SK-N-SH (cell line): ENCODE measurements at regions of chr10 and their contacts with region 1.

Region 1: GRCh38 chr10:100827819-100828737 is 82.7 kb downstream of the PAX2 start:
- DNase-seq: peak; percentile 91
- H3K4me3 ChIP-seq: peak overlapping the region; percentile 38 to 39
- H3K27ac ChIP-seq: no peak overlapping the region
- H3K4me1 ChIP-seq: peaks cover 0 to 17% of the 10 kb centered on the region in 2 experiments; a peak in 1 of 4 replicates
- H3K27me3 ChIP-seq: peaks cover 77% of the 10 kb centered on the region
- CTCF ChIP-seq: no peak; the same call in 1 of the 2 replicates
- EP300 ChIP-seq: no peak
- RAD21 ChIP-seq: peak; percentile 64

Region 2: DNA sequence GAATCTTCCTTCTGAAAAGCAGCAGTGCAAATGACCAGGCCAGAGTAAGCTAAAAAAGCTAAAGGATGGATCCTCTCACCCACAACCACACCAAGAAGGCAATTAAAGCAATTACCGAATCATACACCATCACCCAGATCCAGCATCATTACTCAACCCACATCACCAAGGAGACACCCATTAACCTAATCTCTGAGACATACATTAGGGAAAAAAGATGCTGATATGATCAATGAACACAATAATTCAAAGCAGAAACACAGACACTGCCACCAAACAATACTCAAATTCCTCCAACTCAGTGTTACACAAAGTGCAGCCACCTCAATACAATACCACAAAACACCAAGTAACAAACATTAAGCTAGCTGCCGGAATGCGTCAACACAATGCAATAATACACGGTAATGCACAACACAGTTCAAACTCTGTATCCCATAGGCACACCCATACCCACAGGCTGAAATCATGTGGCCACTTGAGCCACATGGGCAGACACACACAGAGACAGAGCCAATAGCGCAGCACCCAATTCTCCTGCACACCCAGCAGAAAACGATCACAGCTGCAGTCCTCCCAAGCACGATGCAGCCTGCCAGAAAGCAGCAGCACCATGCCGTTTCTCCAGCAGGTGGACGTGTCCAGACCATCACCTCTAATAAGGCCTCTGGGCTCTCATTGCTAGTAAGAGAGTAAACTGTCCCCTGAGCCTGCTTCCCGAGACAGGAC is 61.2 kb before region 1 on chr10:
- CTCF ChIA-PET with region 1: interaction called, 13 read pairs
- POLR2A ChIA-PET with region 1: no interaction called
- DNase-seq: peak; percentile 76
- H3K4me3 ChIP-seq: no peak overlapping the region
- H3K27ac ChIP-seq: peak overlapping the region in 1 of 2 experiments; percentile 97; a peak in 2 of 4 replicates
- H3K4me1 ChIP-seq: peaks cover 0 to 35% of the 10 kb centered on the region in 2 experiments; a peak in 2 of 4 replicates
- H3K27me3 ChIP-seq: peaks cover 37% of the 10 kb centered on the region
- CTCF ChIP-seq: no peak
- EP300 ChIP-seq: peak in 1 of 2 experiments; percentile 79; a peak in 2 of 4 replicates
- RAD21 ChIP-seq: peak; percentile 49

Region 3: DNA sequence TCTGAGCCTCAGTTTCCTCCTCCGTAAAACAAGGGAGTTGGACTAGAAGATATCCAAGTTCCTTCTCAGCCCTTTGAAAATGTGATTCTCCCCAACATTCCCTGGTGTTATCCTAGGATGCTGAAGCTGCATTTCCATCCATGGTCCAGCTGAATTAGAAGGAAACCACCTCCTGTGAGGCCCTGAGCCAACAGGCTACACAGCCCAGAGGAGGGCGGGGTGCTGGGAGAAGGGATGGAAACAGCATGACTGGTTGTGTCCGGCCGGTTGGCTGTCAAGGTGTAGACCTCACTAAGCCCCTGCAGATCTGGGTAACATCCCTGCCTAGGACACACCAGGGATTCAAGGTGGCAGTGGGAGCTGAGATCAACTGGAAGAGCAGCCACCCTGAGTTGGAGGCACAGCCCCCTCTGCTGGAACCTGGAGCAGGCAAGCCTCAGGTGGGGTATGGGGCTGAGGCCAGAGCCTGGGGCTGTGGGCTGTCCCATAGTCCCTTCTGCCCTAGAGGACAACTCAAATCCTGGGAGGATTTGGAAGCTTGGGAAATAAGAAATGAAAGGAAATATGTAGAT is 10.7 kb before region 1 on chr10:
- CTCF ChIA-PET with region 1: interaction called, 19 read pairs
- POLR2A ChIA-PET with region 1: no interaction called
- DNase-seq: no peak
- H3K4me3 ChIP-seq: no peak overlapping the region
- H3K27ac ChIP-seq: no peak overlapping the region
- H3K4me1 ChIP-seq: peaks cover 0 to 4% of the 10 kb centered on the region in 2 experiments; a peak in 1 of 4 replicates
- H3K27me3 ChIP-seq: peaks cover 37% of the 10 kb centered on the region
- CTCF ChIP-seq: no peak
- EP300 ChIP-seq: no peak
- RAD21 ChIP-seq: peak; percentile 59

Region 4: GRCh38 chr10:100960251-100960650 is 132.2 kb after region 1 on chr10:
- CTCF ChIA-PET with region 1: no interaction called
- POLR2A ChIA-PET with region 1: no interaction called
- DNase-seq: no peak
- H3K4me3 ChIP-seq: no peak overlapping the region
- H3K27ac ChIP-seq: no peak overlapping the region
- H3K4me1 ChIP-seq: no peaks in the 10 kb centered on the region
- H3K27me3 ChIP-seq: no peaks in the 10 kb centered on the region
- CTCF ChIP-seq: no peak
- EP300 ChIP-seq: no peak
- RAD21 ChIP-seq: no peak

Region 5: GRCh38 chr10:101258179-101258885 is 430.3 kb after region 1 on chr10:
- CTCF ChIA-PET with region 1: no interaction called
- POLR2A ChIA-PET with region 1: no interaction called
- DNase-seq: no peak
- H3K4me3 ChIP-seq: no peak overlapping the region; a peak in 1 of 4 replicates
- H3K27ac ChIP-seq: no peak overlapping the region
- H3K4me1 ChIP-seq: no peaks in the 10 kb centered on the region
- H3K27me3 ChIP-seq: peaks cover 5% of the 10 kb centered on the region; the same call in 1 of the 2 replicates
- CTCF ChIP-seq: no peak
- EP300 ChIP-seq: no peak
- RAD21 ChIP-seq: no peak